ENCODE measurements at regions of chr6 and their contacts with region 1.

Region 1: GRCh38 chr6:165850434-165851019 is 187.5 kb upstream of the PDE10A start:
- DNase-seq: peak; percentile 83
- CTCF ChIP-seq: peak; percentile 97

Region 2: DNA sequence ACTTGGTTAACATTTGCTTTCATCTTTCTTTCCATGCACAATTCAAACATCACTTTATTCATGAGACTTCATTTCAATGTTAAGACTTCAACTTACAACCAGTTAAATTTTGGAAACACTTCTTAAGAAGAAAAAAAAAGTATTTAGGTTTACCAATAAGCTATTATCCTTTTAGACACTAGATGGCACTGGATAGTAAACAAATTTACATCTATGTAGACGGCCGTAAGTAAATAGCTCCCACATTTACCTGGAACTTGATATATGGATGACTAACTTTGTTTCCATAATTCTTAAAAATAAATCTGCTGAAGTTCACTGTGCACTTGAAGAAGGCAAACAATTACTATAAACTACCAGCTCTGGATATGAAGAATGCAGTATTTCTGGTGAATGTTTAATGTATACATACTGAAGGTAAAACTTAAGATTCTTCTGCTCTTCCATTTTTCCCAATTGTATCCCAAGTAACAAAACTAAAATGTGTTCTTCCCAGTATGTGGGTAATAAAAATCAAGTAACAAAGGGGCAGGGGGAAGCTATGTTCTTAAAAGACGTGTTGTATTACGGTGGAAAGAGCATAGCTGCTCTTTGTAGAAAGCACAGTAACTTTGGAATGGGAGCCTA is 410.5 kb before region 1 on chr6:
- in situ Hi-C with region 1: loop called (anchors 10 kb)
- DNase-seq: no peak
- CTCF ChIP-seq: peak; percentile 54